A549 (cell line): ENCODE measurements at regions of chr1 and their contacts with region 1.

Region 1: DNA sequence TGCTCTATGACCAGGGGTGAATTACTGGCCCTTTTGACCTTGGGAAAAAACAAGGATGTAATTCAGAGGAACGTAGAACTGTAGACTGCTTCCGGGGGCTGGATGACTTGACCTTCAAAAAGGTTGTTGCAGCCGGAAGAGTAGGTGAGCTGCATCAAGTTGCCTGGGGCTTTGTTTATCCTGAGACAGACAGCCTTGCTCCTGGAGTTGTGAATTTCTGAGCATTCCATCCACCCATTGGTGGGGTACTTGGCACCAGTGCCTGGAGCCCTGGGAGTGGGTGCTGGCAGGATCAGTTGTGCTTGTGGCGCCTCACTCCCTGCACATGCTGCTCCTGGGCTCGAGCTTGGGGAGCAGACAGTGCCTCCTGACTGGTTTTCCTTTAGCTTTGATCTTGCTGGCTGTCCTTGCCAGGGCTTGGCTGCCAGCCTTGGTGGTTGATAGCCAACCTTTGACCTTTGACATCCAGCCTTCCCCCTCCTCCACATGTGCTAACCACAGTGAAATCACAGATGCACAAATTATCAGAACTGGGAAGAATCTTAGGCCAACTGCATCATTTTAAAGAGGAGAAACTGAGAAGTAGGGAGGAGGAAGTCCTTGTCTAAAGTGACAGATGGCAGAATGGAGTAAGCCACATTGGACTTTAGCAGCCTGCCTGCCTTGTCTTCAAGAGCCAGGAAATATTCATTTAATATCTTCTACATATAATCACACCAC is 16.3 kb upstream of the MYOG start:
- DNase-seq: no peak
- ATAC-seq: no peak
- H3K4me3 ChIP-seq: no peak overlapping the region
- H3K27ac ChIP-seq: no peak overlapping the region
- H3K4me1 ChIP-seq: no peaks in the 10 kb centered on the region
- CTCF ChIP-seq: no peak
- EP300 ChIP-seq: no peak
- POLR2A ChIP-seq: no peak
- RAD21 ChIP-seq: no peak

Region 2: GRCh38 chr1:203112301-203112874 is 10.3 kb after region 1 on chr1:
- CTCF ChIA-PET with region 1: interaction called, 20 read pairs
- POLR2A ChIA-PET with region 1: no interaction called
- DNase-seq: no peak
- ATAC-seq: no peak
- H3K4me3 ChIP-seq: no peak overlapping the region
- H3K27ac ChIP-seq: no peak overlapping the region
- H3K4me1 ChIP-seq: no peaks in the 10 kb centered on the region
- CTCF ChIP-seq: no peak
- EP300 ChIP-seq: no peak
- POLR2A ChIP-seq: no peak
- RAD21 ChIP-seq: no peak